Activated CD4-positive, alpha-beta memory T cell treated with anti-CD3 and anti-CD28 coated beads for 36 hours (primary cell): ENCODE measurements at regions of chr4 and their contacts with region 1.

Region 1: DNA sequence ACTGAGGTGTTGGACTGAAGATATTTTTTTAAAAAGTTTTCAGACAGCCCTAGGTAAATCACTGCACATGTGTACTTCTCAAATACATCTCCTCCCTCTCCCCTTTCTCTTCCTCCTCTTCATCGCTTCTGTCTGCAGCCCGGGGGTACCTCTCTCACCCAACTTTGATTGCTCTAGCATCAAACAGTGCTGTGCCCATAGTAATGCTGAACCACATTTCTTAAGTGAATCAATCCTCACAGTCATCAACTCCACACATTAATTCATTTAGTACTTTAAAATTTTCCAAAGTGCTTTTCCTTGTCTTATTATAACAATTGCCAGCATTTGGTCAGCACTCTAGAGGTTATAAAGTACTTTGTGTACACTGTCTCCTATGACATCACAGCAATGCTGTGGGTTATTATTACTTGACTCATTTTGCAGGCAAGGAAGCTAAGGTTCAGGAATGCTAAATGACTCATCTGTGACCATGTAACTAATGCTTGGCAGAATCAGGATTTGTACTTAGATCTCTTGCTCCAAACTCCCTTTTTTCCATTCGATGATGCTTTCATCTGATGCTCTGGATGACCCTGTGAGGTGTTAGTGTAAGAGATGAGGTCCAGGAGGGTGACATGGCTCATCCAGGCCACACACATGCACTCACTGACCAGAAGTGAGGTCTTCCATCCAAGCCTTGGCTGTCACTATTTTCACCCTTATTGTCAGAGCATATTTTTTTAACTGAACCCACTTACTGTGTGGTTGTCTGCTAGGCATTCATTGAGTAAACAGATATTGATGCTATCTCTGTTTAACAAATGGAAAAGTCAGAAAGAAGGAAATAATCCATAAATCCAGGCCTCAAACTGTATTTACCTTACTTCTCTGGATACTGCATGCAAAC is 58.8 kb downstream of the RHOH start:
- DNase-seq: no peak
- H3K4me3 Mint-ChIP-seq: no peak overlapping the region
- H3K27ac Mint-ChIP-seq: peak overlapping the region; percentile 72
- H3K4me1 Mint-ChIP-seq: peaks cover 59% of the 10 kb centered on the region
- H3K27me3 Mint-ChIP-seq: no peaks in the 10 kb centered on the region

Region 2: GRCh38 chr4:40205259-40206198 is 50.1 kb before region 1 on chr4:
- CTCF ChIA-PET with region 1: no interaction called
- POLR2A ChIA-PET with region 1: interaction called, 4 read pairs
- intact Hi-C with region 1: loop called (anchors 1 kb)
- DNase-seq: peak; percentile 69
- H3K4me3 Mint-ChIP-seq: peak overlapping the region; percentile 93
- H3K27ac Mint-ChIP-seq: peak overlapping the region; percentile 98
- H3K4me1 Mint-ChIP-seq: peaks cover 61% of the 10 kb centered on the region
- H3K27me3 Mint-ChIP-seq: no peaks in the 10 kb centered on the region

Region 3: GRCh38 chr4:40238700-40239548 is 16.7 kb before region 1 on chr4:
- CTCF ChIA-PET with region 1: no interaction called
- POLR2A ChIA-PET with region 1: interaction called, 3 read pairs
- intact Hi-C with region 1: loop called (anchors 1 kb)
- DNase-seq: peak; percentile 91
- H3K4me3 Mint-ChIP-seq: peak overlapping the region; percentile 75
- H3K27ac Mint-ChIP-seq: peak overlapping the region; percentile 96
- H3K4me1 Mint-ChIP-seq: peaks cover 88% of the 10 kb centered on the region
- H3K27me3 Mint-ChIP-seq: no peaks in the 10 kb centered on the region

Region 4: GRCh38 chr4:40283968-40284367 is 28.3 kb after region 1 on chr4:
- CTCF ChIA-PET with region 1: interaction called, 4 read pairs
- POLR2A ChIA-PET with region 1: no interaction called
- intact Hi-C with region 1: loop called (anchors 1 kb)
- DNase-seq: peak; percentile 92
- H3K4me3 Mint-ChIP-seq: peak overlapping the region; percentile 55
- H3K27ac Mint-ChIP-seq: peak overlapping the region; percentile 82
- H3K4me1 Mint-ChIP-seq: peaks cover 60% of the 10 kb centered on the region
- H3K27me3 Mint-ChIP-seq: no peaks in the 10 kb centered on the region